ENCODE measurements at regions of chr13 and their contacts with region 1.

Region 1: DNA sequence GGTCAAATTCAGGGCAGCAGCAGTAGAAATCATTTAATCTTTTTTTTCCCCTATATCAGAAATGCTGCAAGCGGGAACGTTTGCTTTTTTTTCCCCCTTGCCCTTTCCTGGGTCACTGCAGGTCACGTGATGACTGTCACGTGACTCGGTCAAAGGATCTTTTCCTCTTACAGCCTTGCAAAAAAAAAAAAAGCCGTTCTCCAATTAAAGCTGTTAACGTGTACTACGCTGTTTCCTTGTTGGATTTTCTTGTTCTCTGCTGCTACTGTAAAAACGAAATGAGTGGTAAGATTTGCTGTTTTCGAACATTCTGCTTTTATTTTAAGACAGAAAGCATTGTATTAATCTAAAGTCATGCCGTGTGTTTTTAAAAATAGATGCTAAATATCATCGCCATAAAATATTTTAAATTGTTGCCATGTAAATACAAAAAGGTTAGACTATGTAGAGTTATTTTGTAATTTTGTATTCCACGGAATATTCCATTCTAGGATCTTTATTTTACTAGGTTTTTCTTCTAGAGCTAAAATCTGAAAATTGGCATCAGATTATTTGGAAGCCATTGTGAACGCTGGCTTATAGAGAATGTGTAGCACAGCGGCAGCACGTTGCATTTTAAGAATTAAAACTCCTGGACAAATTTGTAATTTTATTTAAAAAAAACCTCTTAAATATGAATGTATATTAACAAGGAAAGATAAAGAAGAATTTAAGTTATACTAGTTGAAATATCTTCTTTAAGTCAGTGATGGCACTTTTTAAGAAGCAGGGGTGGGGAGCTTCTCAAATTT is 109.8 kb upstream of the MLNR start:
- DNase-seq: peak; percentile 72 to 80 (median 75)
- H3K4me3 ChIP-seq: peak overlapping the region; percentile 76 to 78
- H3K4me3 Mint-ChIP-seq: peak overlapping the region; percentile 86 to 94 (median 92)
- H3K27ac ChIP-seq: peak overlapping the region; percentile 65
- H3K27ac Mint-ChIP-seq: peak overlapping the region; percentile 84 to 95 (median 92)
- H3K4me1 ChIP-seq: peaks cover 40% of the 10 kb centered on the region
- H3K4me1 Mint-ChIP-seq: peaks cover 24 to 46% (median 29%) of the 10 kb centered on the region in 4 donors
- H3K27me3 ChIP-seq: no peaks in the 10 kb centered on the region
- H3K27me3 Mint-ChIP-seq: no peaks in the 10 kb centered on the region

Region 2: DNA sequence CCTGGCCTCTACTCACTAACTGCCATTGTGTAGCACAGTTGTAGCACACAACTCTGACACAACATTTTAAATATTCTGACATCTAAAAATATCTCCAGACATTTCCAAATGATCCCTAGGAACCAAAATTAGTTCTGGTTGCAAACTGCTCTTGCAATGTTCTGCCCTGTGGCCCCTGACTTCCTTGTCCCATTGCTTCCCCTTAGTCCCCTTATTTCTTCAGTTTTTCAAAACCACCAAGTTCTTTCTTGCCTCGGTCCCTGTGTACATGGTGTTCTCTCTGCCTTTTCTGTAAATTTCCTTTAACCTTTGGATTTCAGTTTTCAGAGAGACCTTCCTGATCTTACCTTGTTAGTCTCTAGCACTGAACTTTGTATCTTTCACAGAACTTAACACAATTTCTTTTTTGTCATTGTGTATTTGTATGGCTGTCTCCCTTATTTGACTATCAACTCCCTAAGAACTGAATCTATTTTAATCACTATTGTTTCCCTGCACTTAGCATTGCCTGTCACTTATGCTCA is 22.2 kb after region 1 on chr13:
- CTCF ChIA-PET with region 1: no interaction called
- POLR2A ChIA-PET with region 1: no interaction called
- intact Hi-C with region 1: loop called (anchors 2 kb)
- DNase-seq: no peak
- H3K4me3 ChIP-seq: no peak overlapping the region
- H3K4me3 Mint-ChIP-seq: peak overlapping the region in 1 of 8 donors; percentile 23
- H3K27ac ChIP-seq: no peak overlapping the region
- H3K27ac Mint-ChIP-seq: peak overlapping the region in 3 of 7 donors; percentile 37 to 59 (median 45)
- H3K4me1 ChIP-seq: no peaks in the 10 kb centered on the region
- H3K4me1 Mint-ChIP-seq: peaks cover 12 to 21% (median 17%) of the 10 kb centered on the region in 4 donors
- H3K27me3 ChIP-seq: no peaks in the 10 kb centered on the region
- H3K27me3 Mint-ChIP-seq: no peaks in the 10 kb centered on the region

Region 3: DNA sequence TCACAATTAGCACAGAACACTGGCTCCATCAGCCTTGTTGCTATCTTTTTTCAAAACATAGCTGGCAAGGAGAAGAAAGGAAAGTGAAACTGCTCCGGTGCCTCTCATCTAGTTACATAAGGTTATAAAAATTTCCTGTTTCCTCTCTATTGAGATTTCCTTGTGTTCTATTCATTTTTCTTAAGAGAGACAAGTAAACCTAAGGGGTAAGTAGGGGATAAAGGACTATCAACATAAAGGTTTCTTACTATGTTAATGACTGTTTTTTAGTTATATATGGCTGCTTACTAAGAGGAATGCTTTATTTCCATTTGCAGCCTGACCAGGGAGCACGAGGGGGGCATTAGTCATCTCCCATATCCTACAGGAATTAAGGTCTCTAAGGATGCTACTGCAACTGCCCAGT is 36.6 kb after region 1 on chr13:
- CTCF ChIA-PET with region 1: no interaction called
- POLR2A ChIA-PET with region 1: interaction called, 5 read pairs
- intact Hi-C with region 1: loop called (anchors 5 kb)
- DNase-seq: peak; percentile 31 to 55 (median 45)
- H3K4me3 ChIP-seq: peak overlapping the region; percentile 13 to 30
- H3K4me3 Mint-ChIP-seq: peak overlapping the region; percentile 72 to 97 (median 88)
- H3K27ac ChIP-seq: peak overlapping the region; percentile 67
- H3K27ac Mint-ChIP-seq: peak overlapping the region; percentile 86 to 97 (median 94)
- H3K4me1 ChIP-seq: peaks cover 20% of the 10 kb centered on the region
- H3K4me1 Mint-ChIP-seq: peaks cover 30 to 67% (median 40%) of the 10 kb centered on the region in 4 donors
- H3K27me3 ChIP-seq: no peaks in the 10 kb centered on the region
- H3K27me3 Mint-ChIP-seq: no peaks in the 10 kb centered on the region